Activated CD4-positive, alpha-beta T cell treated with anti-CD3 and anti-CD28 coated beads, Interleukin-2, amount 10 ng/mL, durations not matched to agents 24 days and 14 days (primary cell): ENCODE measurements at regions of chr2 and their contacts with region 1.

Region 1: GRCh38 chr2:231168460-231169139 is 29.8 kb upstream of the ARMC9 start:
- DNase-seq: peak; percentile 37
- H3K4me3 Mint-ChIP-seq: no peak overlapping the region
- H3K27ac Mint-ChIP-seq: peak overlapping the region; percentile 68
- H3K4me1 Mint-ChIP-seq: peaks cover 22% of the 10 kb centered on the region
- H3K27me3 Mint-ChIP-seq: no peaks in the 10 kb centered on the region

Region 2: GRCh38 chr2:230902180-230902899 is 266.3 kb before region 1 on chr2:
- intact Hi-C with region 1: no loop called
- DNase-seq: peak; percentile 80
- H3K4me3 Mint-ChIP-seq: no peak overlapping the region
- H3K27ac Mint-ChIP-seq: no peak overlapping the region
- H3K4me1 Mint-ChIP-seq: peaks cover 27% of the 10 kb centered on the region
- H3K27me3 Mint-ChIP-seq: peaks cover 47% of the 10 kb centered on the region

Region 3: GRCh38 chr2:231124838-231125568 is 43.6 kb before region 1 on chr2 and contains the start of gene HTR2B:
- intact Hi-C with region 1: loop called (anchors 1 kb)
- DNase-seq: peak; percentile 60
- H3K4me3 Mint-ChIP-seq: peak within 1 kb of the TSS; percentile 26
- H3K27ac Mint-ChIP-seq: no peak within 1 kb of the TSS
- H3K4me1 Mint-ChIP-seq: peaks cover 17% of the 10 kb centered on the region
- H3K27me3 Mint-ChIP-seq: no peaks in the 10 kb centered on the region
- total RNA-seq, gene HTR2B: 0.09 TPM in 1 of 2 replicates, not detected in the other